ENCODE measurements at regions of chr2 and their contacts with region 1.

Region 1: DNA sequence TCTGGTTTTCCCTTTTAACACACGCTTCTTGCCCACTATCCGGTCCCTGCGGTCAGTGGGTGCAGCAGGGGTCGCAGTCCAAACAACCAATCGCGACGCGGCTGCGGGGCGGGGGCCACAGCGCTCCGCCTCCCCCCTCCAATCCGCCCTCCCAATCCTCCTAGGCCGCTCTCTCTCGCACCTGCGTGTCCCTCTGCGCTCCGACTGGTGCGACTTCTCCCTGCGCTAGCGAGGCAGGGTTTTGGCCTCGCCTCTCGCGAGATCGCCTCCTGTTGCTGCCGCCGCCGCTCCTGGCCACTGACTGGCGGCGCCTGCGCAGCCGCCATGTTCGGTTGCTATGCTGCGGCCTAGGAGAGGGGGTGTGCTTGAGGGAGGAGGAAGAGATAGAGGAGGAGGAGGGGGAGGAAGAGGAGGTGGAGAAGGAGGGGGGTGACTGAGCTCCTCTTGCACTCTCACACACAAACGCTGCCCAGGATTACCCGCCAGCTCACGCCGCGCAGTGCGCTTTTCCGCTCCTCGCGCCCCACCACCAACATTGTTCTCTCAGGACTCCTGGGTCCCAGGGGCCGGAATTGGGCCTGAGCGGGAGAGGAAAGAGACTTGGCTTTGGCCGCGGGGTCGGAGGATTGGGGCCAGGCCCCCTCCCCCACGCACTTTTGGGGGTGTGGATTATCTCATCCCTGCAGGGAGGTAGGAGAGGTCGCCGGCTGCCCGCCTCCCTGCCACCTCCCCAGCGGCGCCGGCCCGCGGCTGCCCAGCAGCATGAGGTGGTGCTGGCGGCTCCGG is at the start of gene PTPN4:
- DNase-seq: peak; percentile 99
- ATAC-seq: peak; percentile 86
- H3K4me3 ChIP-seq: peak within 1 kb of the TSS; percentile 97
- H3K27ac ChIP-seq: peak within 1 kb of the TSS; percentile 90
- H3K4me1 ChIP-seq: peaks cover 34% of the 10 kb centered on the region
- H3K27me3 ChIP-seq: no peaks in the 10 kb centered on the region
- CTCF ChIP-seq: no peak
- total RNA-seq, gene PTPN4: 41.2 and 44.5 TPM in 2 replicates

Region 2: DNA sequence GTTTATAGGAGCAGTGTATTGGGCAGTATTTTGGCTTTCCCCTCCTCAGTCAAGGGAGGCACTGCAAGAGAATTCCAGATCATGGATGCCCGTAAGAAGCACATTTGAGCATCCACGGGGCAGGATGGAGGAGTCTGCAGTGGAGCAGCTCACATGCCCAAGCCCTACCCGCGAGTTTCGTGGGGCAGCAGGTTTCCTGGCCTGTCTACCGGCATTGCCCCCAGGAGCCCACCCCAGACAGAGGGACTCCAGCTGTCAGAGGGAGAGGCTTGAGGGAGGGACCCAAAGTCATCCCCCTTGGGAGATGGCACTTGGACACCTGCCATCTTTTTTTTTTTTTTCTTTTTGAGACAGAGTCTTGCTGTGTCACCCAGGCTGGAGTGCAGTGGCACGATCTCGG is 49.4 kb before region 1 on chr2:
- CTCF ChIA-PET with region 1: no interaction called
- POLR2A ChIA-PET with region 1: no interaction called
- intact Hi-C with region 1: no loop called
- DNase-seq: no peak
- ATAC-seq: no peak
- H3K4me3 ChIP-seq: no peak overlapping the region
- H3K27ac ChIP-seq: no peak overlapping the region
- H3K4me1 ChIP-seq: no peaks in the 10 kb centered on the region
- H3K27me3 ChIP-seq: no peaks in the 10 kb centered on the region
- CTCF ChIP-seq: no peak

Region 3: DNA sequence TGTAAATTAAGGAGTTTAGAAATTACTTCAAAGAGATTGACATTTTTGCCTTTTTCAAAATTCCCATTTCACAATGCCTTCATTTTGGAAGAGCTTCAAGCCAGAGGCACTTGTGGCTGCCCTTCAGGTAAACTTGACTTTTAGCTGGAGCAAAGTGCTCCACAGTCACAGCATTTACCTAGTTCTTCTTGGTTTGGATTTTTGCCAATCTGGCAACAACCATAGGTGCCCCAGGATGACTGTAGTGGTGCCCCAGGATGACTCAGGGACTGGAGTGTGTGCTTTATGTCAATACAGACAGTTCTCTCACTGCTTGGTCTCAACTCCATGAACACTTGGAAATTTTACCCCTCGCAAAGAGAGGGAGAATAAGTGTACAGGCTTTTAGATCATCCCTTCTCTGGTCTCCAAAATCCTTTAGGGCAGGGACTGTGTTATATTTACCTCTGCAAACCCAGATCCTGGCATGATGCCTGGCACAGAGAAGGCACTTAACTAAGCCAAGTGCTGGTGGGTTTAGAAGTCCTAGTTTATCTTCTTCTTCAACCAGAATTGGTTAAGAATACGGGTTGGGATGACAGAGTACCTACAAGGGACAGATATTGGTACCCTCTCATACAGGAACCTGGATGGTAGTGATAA is 15.2 kb before region 1 on chr2:
- CTCF ChIA-PET with region 1: interaction called, 3 read pairs
- POLR2A ChIA-PET with region 1: interaction called, 3 read pairs
- intact Hi-C with region 1: loop called (anchors 1 kb)
- DNase-seq: peak; percentile 97
- ATAC-seq: peak; percentile 75
- H3K4me3 ChIP-seq: no peak overlapping the region
- H3K27ac ChIP-seq: peak overlapping the region; percentile 66
- H3K4me1 ChIP-seq: peaks cover 80% of the 10 kb centered on the region
- H3K27me3 ChIP-seq: no peaks in the 10 kb centered on the region
- CTCF ChIP-seq: no peak

Region 4: GRCh38 chr2:119809339-119810048 is 49.9 kb after region 1 on chr2:
- CTCF ChIA-PET with region 1: no interaction called
- POLR2A ChIA-PET with region 1: no interaction called
- intact Hi-C with region 1: loop called (anchors 5 kb)
- DNase-seq: peak; percentile 73
- ATAC-seq: peak; percentile 79
- H3K4me3 ChIP-seq: peak overlapping the region; percentile 40; the same call in 1 of the 2 replicates
- H3K27ac ChIP-seq: peak overlapping the region; percentile 71
- H3K4me1 ChIP-seq: peaks cover 25% of the 10 kb centered on the region
- H3K27me3 ChIP-seq: no peaks in the 10 kb centered on the region
- CTCF ChIP-seq: no peak

Region 5: GRCh38 chr2:119826370-119826961 is 66.8 kb after region 1 on chr2:
- CTCF ChIA-PET with region 1: interaction called, 12 read pairs
- POLR2A ChIA-PET with region 1: interaction called, 3 read pairs
- intact Hi-C with region 1: no loop called
- DNase-seq: peak; percentile 67
- ATAC-seq: peak; percentile 57
- H3K4me3 ChIP-seq: no peak overlapping the region
- H3K27ac ChIP-seq: no peak overlapping the region
- H3K4me1 ChIP-seq: peaks cover 30% of the 10 kb centered on the region
- H3K27me3 ChIP-seq: no peaks in the 10 kb centered on the region
- CTCF ChIP-seq: peak; percentile 88

Region 6: DNA sequence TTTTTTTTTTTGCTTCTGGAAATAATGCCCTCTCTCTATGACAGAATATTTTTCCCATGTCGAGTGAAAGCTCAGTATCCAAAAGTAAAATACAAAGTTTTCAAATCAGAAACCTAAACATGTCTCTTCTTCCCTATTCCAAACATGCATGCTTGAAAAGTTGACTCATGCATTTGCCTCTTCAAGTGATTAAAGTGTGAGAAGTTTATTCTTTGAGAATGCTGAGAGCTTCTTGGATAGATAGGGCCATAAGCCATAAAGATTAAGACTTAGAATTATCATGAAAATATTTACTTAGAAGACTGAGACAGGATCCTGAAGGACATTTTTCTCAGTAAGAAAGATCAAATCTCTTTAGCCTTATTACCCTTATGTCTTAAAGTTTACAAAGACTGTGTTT is 154.6 kb after region 1 on chr2:
- CTCF ChIA-PET with region 1: no interaction called
- POLR2A ChIA-PET with region 1: no interaction called
- intact Hi-C with region 1: no loop called
- DNase-seq: peak; percentile 2
- ATAC-seq: no peak
- H3K4me3 ChIP-seq: no peak overlapping the region
- H3K27ac ChIP-seq: no peak overlapping the region
- H3K4me1 ChIP-seq: no peaks in the 10 kb centered on the region
- H3K27me3 ChIP-seq: no peaks in the 10 kb centered on the region
- CTCF ChIP-seq: no peak

Region 7: DNA sequence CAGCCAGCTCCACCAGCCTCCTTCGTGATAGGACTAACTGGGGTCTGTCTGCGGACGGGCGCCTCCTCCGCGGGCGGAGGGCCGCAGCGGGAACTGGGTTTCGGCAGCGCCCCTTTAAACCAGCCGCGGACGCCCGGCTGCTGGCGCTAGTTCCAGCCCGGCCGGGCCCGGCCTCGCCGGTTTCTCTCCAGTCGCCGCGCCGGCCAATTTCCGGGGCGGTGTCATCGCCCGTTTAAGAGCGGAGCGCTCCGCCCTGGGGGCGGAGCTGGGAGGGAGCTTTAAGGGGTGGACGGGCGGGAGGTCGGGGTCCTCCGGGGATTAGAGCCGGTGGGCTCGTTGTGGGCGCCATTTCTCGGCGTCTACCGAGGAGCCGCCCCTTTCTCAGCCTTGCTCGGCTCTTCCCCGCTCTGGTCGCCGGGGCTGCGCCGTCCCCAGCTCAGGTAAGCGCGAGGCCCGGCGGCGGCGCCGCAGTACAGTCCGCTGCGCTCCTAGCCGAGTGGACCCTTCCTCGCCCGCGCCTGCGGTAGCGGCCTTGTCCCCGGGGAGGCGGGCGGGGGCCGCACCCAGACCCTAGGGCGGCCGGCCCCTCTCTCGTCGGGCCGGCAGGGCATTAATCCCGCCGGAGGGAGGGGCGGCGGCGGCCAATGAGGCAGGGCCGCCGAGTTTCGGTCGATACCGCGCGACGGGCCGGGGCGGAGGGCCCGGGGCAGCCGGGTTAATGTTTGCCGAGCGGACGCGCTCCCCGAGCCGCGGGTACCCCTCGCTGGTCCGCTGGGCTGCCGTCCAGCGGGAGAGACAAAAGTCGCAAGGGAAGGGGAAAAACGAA is 253.3 kb after region 1 on chr2 and contains the start of gene EPB41L5:
- CTCF ChIA-PET with region 1: no interaction called
- POLR2A ChIA-PET with region 1: no interaction called
- intact Hi-C with region 1: loop called (anchors 5 kb)
- DNase-seq: peak; percentile 96
- ATAC-seq: peak; percentile 91
- H3K4me3 ChIP-seq: peak within 1 kb of the TSS; percentile 80
- H3K27ac ChIP-seq: peak within 1 kb of the TSS; percentile 48
- H3K4me1 ChIP-seq: peaks cover 17% of the 10 kb centered on the region
- H3K27me3 ChIP-seq: no peaks in the 10 kb centered on the region
- CTCF ChIP-seq: 0 out of 2 replicates have a peak, but pooled peaks have one; percentile 8
- total RNA-seq, gene EPB41L5: 11.7 and 14.0 TPM in 2 replicates